Right ventricle myocardium inferior (tissue), 1 donor: ENCODE measurements at regions of chr2 and their contacts with region 1.

Region 1: DNA sequence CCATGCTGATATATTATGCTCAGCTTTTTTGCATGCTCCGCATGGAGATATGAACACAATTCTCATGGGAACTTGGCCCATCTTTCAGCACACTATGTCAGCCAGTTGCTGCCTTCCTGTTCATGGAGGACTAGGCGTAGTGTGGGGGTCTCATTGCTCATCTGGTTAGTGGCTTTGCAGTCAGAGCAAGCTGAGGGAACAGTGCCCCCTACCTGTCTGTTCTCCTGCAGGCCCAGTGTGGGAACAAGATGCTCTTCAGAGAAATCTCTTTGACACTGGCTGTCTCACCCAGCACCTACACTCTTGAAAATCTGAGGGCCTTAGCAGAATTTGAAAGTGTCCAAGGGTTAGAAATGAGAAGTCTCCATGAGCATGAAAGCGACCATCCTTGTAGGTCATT is 47.1 kb downstream of the SPTBN1 start:
- DNase-seq: no peak
- ATAC-seq: no peak

Region 2: DNA sequence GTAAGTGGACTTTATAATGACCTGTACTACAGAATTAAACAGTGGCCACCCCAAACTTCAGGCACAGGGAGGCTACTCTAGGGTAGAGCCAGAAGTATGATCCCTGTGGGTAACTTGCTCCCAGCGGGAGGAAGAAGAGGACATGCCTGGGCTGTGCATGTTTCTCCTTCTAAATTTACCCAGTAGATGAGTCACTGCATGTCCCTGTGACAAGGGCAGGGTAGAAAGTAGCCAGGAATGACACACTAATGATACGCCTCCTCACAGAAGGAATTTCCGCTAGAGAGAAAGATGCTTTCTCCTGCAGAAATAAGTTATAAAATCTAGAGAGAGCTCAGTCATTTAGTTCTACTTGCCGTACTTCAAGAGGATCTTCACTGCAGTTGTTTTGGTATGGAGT is 380.3 kb before region 1 on chr2:
- intact Hi-C with region 1: loop called (anchors 10 kb)
- DNase-seq: no peak
- ATAC-seq: peak; percentile 92